ENCODE measurements at regions of chr15 and their contacts with region 1.

Region 1: GRCh38 chr15:90886041-90886614 is 1.8 kb downstream of the FES start:
- DNase-seq: peak; percentile 86 to 88
- ATAC-seq: peak; percentile 50 to 81 (median 69)
- H3K4me3 ChIP-seq: peak overlapping the region in 9 of 10 donors; percentile 47 to 83 (median 73)
- H3K27ac ChIP-seq: peak overlapping the region; percentile 88 to 100 (median 97)
- H3K4me1 ChIP-seq: peaks cover 16 to 66% (median 50%) of the 10 kb centered on the region in 9 donors
- H3K27me3 ChIP-seq: no peaks in the 10 kb centered on the region
- CTCF ChIP-seq: peak; percentile 95 to 100 (median 99)

Region 2: GRCh38 chr15:90497912-90498311 is 388.2 kb before region 1 on chr15:
- intact Hi-C with region 1: loop called in 1 of 10 experiments (anchors 10 kb)
- DNase-seq: no peak
- ATAC-seq: peak in 4 of 8 donors; percentile 26 to 40 (median 38)
- H3K4me3 ChIP-seq: no peak overlapping the region
- H3K27ac ChIP-seq: no peak overlapping the region
- H3K4me1 ChIP-seq: peaks cover 0 to 18% (median 12%) of the 10 kb centered on the region in 9 donors
- H3K27me3 ChIP-seq: no peaks in the 10 kb centered on the region
- CTCF ChIP-seq: no peak

Region 3: DNA sequence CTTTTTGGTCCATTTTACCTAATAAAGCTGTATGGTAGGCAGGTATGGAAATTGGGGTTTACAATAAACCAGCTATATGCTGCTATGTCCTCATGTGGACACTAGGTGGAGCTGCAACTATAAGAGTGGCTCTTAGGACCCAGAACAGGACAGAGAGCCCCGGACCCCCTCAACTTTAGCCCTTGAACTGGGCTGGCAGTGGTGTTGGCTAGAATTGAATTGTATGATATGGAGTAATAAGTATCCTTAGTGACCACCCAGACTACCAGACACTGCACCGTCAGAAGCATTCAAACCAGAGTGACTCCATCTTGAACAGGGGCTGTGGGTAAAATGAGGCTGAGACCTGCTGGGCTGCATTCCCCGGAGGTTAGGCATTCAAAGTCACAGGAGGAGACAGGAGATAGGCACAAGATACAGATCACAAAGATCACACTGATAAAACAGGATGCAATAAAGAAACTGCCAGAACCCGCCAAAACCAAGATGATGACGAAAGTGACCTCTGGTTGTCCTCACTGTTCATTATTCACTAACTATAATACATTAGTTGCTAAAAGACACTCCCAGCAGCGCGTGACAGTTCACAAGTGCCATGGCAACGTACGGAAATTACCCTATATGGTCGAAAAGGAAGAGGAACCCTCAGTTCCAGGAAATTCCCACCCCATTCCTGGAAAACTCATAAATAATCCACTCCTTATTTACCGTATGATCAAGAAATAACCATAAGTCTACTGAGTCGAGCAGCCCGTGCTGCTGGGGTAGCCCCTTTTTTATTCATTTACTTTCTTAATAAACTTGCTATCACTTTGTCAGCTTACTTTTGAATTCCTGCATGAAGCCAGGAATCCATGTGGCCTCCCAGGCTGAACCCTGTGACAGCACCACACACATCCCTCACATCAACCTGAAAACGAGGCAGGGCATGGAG is 237.7 kb before region 1 on chr15:
- intact Hi-C with region 1: loop called (anchors 1 to 5 kb)
- DNase-seq: peak; percentile 37 to 82
- ATAC-seq: peak; percentile 66 to 91 (median 84)
- H3K4me3 ChIP-seq: peak overlapping the region in 3 of 10 donors; percentile 12 to 17 (median 14)
- H3K27ac ChIP-seq: peak overlapping the region in 9 of 10 donors; percentile 31 to 84 (median 65)
- H3K4me1 ChIP-seq: peaks cover 0 to 29% (median 20%) of the 10 kb centered on the region in 9 donors
- H3K27me3 ChIP-seq: no peaks in the 10 kb centered on the region
- CTCF ChIP-seq: peak; percentile 87 to 96 (median 92)

Region 4: GRCh38 chr15:90697181-90697580 is 188.9 kb before region 1 on chr15:
- intact Hi-C with region 1: loop called in 2 of 10 experiments (anchors 5 kb)
- DNase-seq: no peak
- ATAC-seq: no peak
- H3K4me3 ChIP-seq: no peak overlapping the region
- H3K27ac ChIP-seq: no peak overlapping the region
- H3K4me1 ChIP-seq: peaks cover 0 to 15% (median 0%) of the 10 kb centered on the region in 9 donors
- H3K27me3 ChIP-seq: no peaks in the 10 kb centered on the region
- CTCF ChIP-seq: no peak

Region 5: DNA sequence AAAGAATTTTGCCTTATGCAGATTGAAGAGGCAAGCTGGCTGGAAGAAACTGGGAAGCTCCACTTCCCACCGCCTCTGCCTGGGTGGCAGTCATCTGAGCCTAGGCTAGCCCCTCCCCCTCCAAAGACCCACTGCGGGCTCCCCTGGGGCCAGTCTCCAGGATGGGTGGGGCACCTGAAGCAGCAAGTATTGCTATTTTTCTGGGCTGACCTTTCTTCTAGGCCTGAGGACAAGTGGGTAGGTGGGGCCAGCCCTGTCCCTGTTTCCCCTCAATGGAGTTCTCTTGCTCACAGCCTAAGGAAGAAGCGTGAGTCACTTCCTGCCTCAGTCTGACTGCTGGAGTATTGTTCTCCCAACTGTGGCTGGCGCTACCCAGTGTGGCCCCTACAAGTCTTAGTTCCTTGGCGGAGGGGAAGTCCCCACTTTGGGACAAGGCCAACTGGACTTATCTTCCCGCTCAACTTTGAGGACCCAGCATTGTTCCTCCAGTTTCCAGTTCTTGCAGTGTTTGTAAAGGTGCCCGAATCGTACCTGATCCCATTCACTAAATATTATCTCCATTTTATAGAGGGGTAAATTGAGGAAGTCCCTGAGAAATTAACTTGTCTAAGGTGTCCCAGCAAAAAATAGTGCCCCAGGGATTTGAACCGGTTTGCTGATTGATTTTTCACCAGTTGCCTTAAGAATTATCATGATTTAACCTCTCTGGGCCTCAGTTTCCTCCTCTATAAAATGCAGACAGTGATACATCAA is 16.4 kb before region 1 on chr15:
- intact Hi-C with region 1: loop called in 1 of 10 experiments (anchors 2 kb)
- DNase-seq: peak; percentile 81 to 89
- ATAC-seq: peak; percentile 82 to 93 (median 89)
- H3K4me3 ChIP-seq: peak overlapping the region in 8 of 10 donors; percentile 65 to 92 (median 74)
- H3K27ac ChIP-seq: peak overlapping the region; percentile 90 to 100 (median 98)
- H3K4me1 ChIP-seq: peaks cover 20 to 69% (median 52%) of the 10 kb centered on the region in 9 donors
- H3K27me3 ChIP-seq: no peaks in the 10 kb centered on the region
- CTCF ChIP-seq: no peak

Region 6: GRCh38 chr15:91075739-91076138 is 189.6 kb after region 1 on chr15:
- intact Hi-C with region 1: no loop called
- DNase-seq: no peak
- ATAC-seq: no peak
- H3K4me3 ChIP-seq: no peak overlapping the region
- H3K27ac ChIP-seq: no peak overlapping the region
- H3K4me1 ChIP-seq: no peaks in the 10 kb centered on the region
- H3K27me3 ChIP-seq: peaks cover 0 to 18% (median 4%) of the 10 kb centered on the region in 7 donors
- CTCF ChIP-seq: no peak